Lower leg skin (tissue), 4 donors: ENCODE measurements at regions of chr18 and their contacts with region 1.

Region 1: GRCh38 chr18:12283256-12283655 is 24.8 kb upstream of the TUBB6 start:
- DNase-seq: no peak
- H3K4me3 ChIP-seq: no peak overlapping the region
- CTCF ChIP-seq: no peak
- POLR2A ChIP-seq: no peak

Region 2: GRCh38 chr18:12470382-12471075 is 187.3 kb after region 1 on chr18:
- intact Hi-C with region 1: no loop called
- DNase-seq: peak in 1 of 2 donors; percentile 40
- H3K4me3 ChIP-seq: no peak overlapping the region
- CTCF ChIP-seq: no peak
- POLR2A ChIP-seq: no peak

Region 3: DNA sequence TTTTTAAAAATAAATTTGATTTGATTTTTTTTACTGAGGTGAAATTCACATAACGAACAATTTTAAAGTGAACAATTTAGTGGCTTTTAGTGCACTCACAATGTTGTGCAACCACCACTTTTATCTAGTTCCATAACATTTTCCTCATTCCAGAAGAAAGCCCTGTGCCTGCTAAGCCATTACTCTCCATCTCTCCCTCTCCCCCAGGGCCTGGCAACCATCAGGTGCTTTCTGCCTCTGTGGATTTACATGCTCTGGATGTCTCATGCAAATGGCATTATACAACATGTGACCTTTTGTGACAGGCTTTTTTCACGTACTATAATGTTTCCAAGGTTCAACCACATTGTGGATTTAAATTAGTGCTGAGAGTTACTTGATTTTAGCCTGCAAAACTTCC is 915.5 kb after region 1 on chr18:
- intact Hi-C with region 1: loop called (anchors 5 kb)
- DNase-seq: no peak
- H3K4me3 ChIP-seq: no peak overlapping the region
- CTCF ChIP-seq: no peak
- POLR2A ChIP-seq: no peak